Activated CD4-positive, alpha-beta T cell treated with anti-CD3 and anti-CD28 coated beads, Interleukin-2, amount 10 ng/mL, durations not matched to agents 24 days and 14 days (primary cell): ENCODE measurements at regions of chr2 and their contacts with region 1.

Region 1: GRCh38 chr2:168118733-168119514 is 128.5 kb downstream of the STK39 start:
- DNase-seq: peak; percentile 79
- H3K4me3 Mint-ChIP-seq: no peak overlapping the region
- H3K27ac Mint-ChIP-seq: no peak overlapping the region
- H3K4me1 Mint-ChIP-seq: no peaks in the 10 kb centered on the region
- H3K27me3 Mint-ChIP-seq: no peaks in the 10 kb centered on the region

Region 2: GRCh38 chr2:166539340-166540162 is 1579.4 kb before region 1 on chr2:
- intact Hi-C with region 1: loop called (anchors 2 kb)
- DNase-seq: peak; percentile 77
- H3K4me3 Mint-ChIP-seq: no peak overlapping the region
- H3K27ac Mint-ChIP-seq: no peak overlapping the region
- H3K4me1 Mint-ChIP-seq: no peaks in the 10 kb centered on the region
- H3K27me3 Mint-ChIP-seq: no peaks in the 10 kb centered on the region

Region 3: DNA sequence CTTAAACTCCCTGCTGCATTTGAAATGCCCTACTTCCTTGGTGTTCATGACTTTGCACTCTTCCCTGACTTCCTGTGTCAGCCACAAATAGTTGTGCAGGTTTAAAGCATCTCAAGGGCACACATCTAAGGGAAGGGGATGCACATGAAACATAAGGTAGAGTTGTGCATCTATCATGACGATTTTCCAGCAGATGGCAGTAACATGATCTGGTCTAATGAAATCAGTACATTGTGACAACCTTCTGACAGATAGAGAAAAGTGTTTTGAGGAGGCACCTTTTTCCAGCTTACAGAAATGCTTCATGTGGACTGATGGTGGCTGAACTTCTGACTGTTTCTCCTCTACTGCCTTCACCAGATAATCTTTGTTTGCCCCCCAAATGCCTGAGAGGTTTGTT is 991.8 kb before region 1 on chr2:
- intact Hi-C with region 1: loop called (anchors 10 kb)
- DNase-seq: no peak
- H3K4me3 Mint-ChIP-seq: no peak overlapping the region
- H3K27ac Mint-ChIP-seq: no peak overlapping the region
- H3K4me1 Mint-ChIP-seq: no peaks in the 10 kb centered on the region
- H3K27me3 Mint-ChIP-seq: no peaks in the 10 kb centered on the region

Region 4: DNA sequence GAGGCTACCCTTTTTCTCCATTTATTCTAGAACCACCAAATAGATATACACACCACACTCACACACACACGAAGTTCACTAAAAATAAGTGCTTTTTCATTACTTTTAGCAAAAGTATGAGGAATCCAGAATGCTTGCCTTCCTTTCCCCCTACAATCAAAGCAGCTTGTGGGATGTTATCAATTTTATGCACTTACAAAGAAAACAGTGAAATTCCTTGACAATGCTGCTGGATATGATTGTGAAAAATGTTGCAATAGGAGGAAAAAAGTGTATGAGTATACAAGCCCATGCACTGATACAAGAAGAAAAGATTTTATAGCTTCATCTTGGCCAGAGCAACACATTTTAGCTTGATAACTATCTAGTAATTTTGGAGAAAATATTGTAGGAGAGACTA is 961.4 kb before region 1 on chr2:
- intact Hi-C with region 1: no loop called
- DNase-seq: no peak
- H3K4me3 Mint-ChIP-seq: no peak overlapping the region
- H3K27ac Mint-ChIP-seq: no peak overlapping the region
- H3K4me1 Mint-ChIP-seq: no peaks in the 10 kb centered on the region
- H3K27me3 Mint-ChIP-seq: no peaks in the 10 kb centered on the region

Region 5: GRCh38 chr2:167292430-167293171 is 826.3 kb before region 1 on chr2:
- intact Hi-C with region 1: loop called (anchors 10 kb)
- DNase-seq: peak; percentile 91
- H3K4me3 Mint-ChIP-seq: peak within 1 kb of the TSS; percentile 82
- H3K27ac Mint-ChIP-seq: peak within 1 kb of the TSS; percentile 26
- H3K4me1 Mint-ChIP-seq: peaks cover 10% of the 10 kb centered on the region
- H3K27me3 Mint-ChIP-seq: peaks cover 43% of the 10 kb centered on the region

Region 6: GRCh38 chr2:167607211-167607610 is 511.7 kb before region 1 on chr2:
- intact Hi-C with region 1: loop called (anchors 5 kb)
- DNase-seq: no peak
- H3K4me3 Mint-ChIP-seq: no peak overlapping the region
- H3K27ac Mint-ChIP-seq: no peak overlapping the region
- H3K4me1 Mint-ChIP-seq: no peaks in the 10 kb centered on the region
- H3K27me3 Mint-ChIP-seq: no peaks in the 10 kb centered on the region

Region 7: DNA sequence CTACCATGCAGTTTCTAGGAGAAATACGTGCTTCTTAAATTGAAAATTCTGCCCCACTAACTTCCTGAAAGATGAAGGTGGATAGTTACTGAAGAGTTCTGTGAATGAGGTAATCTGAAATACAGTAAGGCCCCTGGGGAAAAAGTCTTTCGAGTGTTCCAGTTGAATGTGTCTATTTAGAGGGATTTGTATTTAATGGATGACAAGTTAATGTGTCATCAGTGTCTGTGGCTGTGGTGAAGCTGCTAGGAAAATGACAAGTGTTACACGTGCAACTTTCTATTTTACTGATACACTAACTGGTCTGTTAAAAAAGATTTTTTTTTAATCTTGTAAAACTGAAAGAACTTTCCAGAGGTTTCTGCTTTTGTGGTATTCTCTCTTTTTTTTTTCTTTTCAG is 256.1 kb before region 1 on chr2:
- intact Hi-C with region 1: loop called (anchors 10 kb)
- DNase-seq: no peak
- H3K4me3 Mint-ChIP-seq: no peak overlapping the region
- H3K27ac Mint-ChIP-seq: no peak overlapping the region
- H3K4me1 Mint-ChIP-seq: peaks cover 8% of the 10 kb centered on the region
- H3K27me3 Mint-ChIP-seq: peaks cover 3% of the 10 kb centered on the region

Region 8: DNA sequence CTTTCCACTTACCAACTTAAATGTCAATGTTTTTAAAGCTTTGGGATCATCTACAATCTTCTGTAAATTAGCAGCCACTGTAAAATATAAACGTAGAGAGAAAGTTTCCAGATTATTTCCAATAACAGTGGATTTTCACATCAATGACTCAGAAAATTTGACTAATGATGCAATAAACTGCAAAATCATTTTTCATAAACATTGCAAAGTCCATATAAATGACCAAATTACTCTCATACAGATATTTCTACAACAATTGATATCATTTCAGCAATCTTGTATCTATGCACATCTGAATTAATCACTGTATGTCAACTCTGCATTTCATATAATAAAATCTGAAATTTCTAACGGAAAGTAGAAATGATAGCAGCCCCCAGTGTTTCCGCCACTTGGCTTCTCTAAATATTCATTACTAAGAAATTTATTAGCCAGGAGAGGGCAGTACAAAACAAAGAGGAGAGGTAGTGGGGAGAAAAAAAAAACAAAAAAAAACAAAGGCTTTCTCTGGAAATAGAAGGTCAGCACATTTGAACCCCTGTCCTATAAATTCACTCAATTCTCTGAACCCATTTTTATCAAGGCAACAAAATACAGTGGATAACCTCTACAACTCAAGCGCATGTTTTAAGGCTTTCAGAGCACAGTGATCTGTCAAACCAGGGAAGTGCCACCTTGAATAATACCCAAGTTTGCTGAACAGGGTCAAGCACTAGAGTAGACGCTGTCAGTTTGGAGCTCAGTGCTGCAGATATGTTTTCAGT is 154.1 kb before region 1 on chr2:
- intact Hi-C with region 1: loop called (anchors 1 kb)
- DNase-seq: no peak
- H3K4me3 Mint-ChIP-seq: no peak overlapping the region
- H3K27ac Mint-ChIP-seq: no peak overlapping the region
- H3K4me1 Mint-ChIP-seq: peaks cover 3% of the 10 kb centered on the region
- H3K27me3 Mint-ChIP-seq: no peaks in the 10 kb centered on the region